Right cardiac atrium (tissue), 5 donors: ENCODE measurements at regions of chr12 and their contacts with region 1.

Region 1: DNA sequence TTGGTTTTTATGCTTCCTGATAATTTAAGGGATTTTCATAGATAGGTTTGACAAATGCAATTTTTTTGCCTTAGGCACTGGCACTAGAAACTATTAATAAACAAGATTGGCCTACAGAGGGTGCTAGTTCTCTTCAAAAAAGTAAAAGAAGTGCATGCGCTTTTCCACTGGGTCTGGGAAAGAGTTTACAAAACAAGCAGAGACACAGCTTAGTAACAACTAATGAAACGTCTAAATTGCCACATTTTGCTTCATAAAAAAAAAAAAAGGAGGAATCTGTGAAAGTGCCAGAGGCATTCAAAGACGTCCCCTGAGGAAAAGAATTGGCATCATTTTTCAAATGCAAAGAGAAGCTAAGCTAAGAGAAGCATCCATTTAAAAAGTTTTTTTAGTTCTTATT is 58.3 kb upstream of the EEA1 start:
- DNase-seq: no peak
- ATAC-seq: peak; percentile 84 to 89
- H3K4me3 ChIP-seq: no peak overlapping the region
- H3K27ac ChIP-seq: no peak overlapping the region
- H3K4me1 ChIP-seq: peaks cover 3% of the 10 kb centered on the region
- H3K27me3 ChIP-seq: no peaks in the 10 kb centered on the region

Region 2: GRCh38 chr12:92779902-92780301 is 207.5 kb before region 1 on chr12:
- intact Hi-C with region 1: no loop called
- DNase-seq: no peak
- ATAC-seq: no peak
- H3K4me3 ChIP-seq: no peak overlapping the region
- H3K27ac ChIP-seq: no peak overlapping the region
- H3K4me1 ChIP-seq: peaks cover 1% of the 10 kb centered on the region
- H3K27me3 ChIP-seq: no peaks in the 10 kb centered on the region

Region 3: DNA sequence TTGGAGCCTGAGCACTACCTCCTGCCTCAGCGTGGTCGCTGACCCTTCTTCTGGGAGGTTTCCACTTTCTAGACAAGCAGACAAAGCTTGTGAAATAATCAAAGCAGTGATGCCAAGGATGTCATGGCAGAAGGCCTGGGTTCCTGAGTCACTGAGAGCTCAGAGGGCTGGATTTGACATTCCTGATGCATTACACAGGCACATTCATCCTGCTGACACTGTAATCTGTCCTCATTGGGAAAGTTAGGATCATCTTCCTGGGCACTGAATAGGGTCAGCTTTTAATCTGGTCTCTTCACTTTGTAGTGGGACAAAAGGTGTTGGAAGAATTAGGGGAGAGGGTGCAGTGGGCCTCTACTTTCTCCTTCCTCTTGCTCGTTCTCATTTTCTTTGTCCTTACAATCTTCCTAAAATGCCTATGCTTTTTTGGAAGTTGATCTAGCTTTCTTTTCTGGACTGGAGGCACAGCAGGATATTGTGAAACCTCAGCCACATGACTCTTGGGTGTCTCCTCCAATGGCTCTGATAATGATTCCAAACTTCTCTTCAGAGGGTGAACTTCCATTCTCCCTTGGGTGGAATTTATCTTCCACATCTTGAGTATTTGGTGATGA is 87.9 kb before region 1 on chr12:
- intact Hi-C with region 1: no loop called
- DNase-seq: peak; percentile 82 to 89 (median 86)
- ATAC-seq: peak; percentile 98 to 99
- H3K4me3 ChIP-seq: no peak overlapping the region
- H3K27ac ChIP-seq: peak overlapping the region; percentile 88
- H3K4me1 ChIP-seq: peaks cover 2% of the 10 kb centered on the region
- H3K27me3 ChIP-seq: no peaks in the 10 kb centered on the region

Region 4: GRCh38 chr12:92942894-92943293 is 44.5 kb before region 1 on chr12:
- intact Hi-C with region 1: no loop called
- DNase-seq: no peak
- ATAC-seq: no peak
- H3K4me3 ChIP-seq: no peak overlapping the region
- H3K27ac ChIP-seq: no peak overlapping the region
- H3K4me1 ChIP-seq: no peaks in the 10 kb centered on the region
- H3K27me3 ChIP-seq: no peaks in the 10 kb centered on the region

Region 5: GRCh38 chr12:93390549-93391297 is 403.4 kb after region 1 on chr12:
- intact Hi-C with region 1: loop called in 2 of 4 experiments (anchors 5 to 10 kb)
- DNase-seq: no peak
- ATAC-seq: peak; percentile 39 to 59
- H3K4me3 ChIP-seq: no peak overlapping the region
- H3K27ac ChIP-seq: peak overlapping the region; percentile 17
- H3K4me1 ChIP-seq: peaks cover 10% of the 10 kb centered on the region
- H3K27me3 ChIP-seq: no peaks in the 10 kb centered on the region

Region 6: DNA sequence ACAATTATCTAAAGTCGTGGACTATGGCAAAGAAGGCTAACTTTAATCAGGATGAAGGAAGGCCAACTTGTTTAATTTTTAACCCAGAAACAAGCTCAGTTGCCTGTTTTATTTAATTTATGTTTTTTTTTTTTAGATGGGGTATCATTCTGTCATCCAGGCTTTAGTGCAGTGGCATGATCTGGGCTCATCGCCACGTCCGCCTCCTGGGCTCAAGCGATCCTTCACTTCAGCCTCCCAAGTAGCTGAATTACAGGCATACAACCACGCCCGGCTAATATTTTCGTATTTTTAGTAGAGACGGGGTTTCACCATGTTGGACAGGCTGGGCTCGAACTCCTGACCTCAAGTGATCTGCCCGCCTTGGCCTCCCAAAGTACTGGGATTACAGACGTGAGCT is 410.1 kb after region 1 on chr12:
- intact Hi-C with region 1: loop called in 3 of 4 experiments (anchors 2 to 10 kb)
- DNase-seq: no peak
- ATAC-seq: no peak
- H3K4me3 ChIP-seq: no peak overlapping the region
- H3K27ac ChIP-seq: no peak overlapping the region
- H3K4me1 ChIP-seq: peaks cover 1% of the 10 kb centered on the region
- H3K27me3 ChIP-seq: no peaks in the 10 kb centered on the region

Region 7: GRCh38 chr12:93419388-93420034 is 432.1 kb after region 1 on chr12:
- intact Hi-C with region 1: loop called in 1 of 4 experiments (anchors 10 kb)
- DNase-seq: no peak
- ATAC-seq: peak in 1 of 2 donors; percentile 53
- H3K4me3 ChIP-seq: no peak overlapping the region
- H3K27ac ChIP-seq: no peak overlapping the region
- H3K4me1 ChIP-seq: no peaks in the 10 kb centered on the region
- H3K27me3 ChIP-seq: no peaks in the 10 kb centered on the region